Activated CD4-positive, alpha-beta memory T cell treated with anti-CD3 and anti-CD28 coated beads for 36 hours (primary cell): ENCODE measurements at regions of chr1 and their contacts with region 1.

Region 1: DNA sequence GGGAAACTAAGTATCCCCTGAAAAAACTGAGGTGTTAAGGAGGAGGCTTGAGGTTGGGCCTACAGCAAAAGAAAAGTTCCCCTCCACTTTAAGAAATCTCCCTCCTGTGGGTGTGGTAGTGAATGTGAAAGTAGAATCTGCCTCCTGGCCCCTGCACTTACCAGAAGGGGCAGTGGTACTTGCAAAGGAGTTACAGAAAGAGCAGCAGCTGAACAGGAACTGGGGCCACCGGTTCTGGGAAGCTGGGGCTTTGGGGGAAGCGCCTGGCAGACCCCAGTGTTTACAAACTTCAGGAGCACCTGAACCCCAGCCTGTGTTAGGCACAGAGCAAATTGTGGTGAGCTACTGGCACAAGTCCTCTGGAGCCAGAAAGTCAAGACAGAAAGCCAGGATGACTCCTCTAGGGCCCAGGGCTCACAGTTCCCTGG is 250.2 kb upstream of the FGGY start:
- DNase-seq: peak; percentile 64
- H3K4me3 Mint-ChIP-seq: no peak overlapping the region
- H3K27ac Mint-ChIP-seq: peak overlapping the region; percentile 64
- H3K4me1 Mint-ChIP-seq: peaks cover 33% of the 10 kb centered on the region
- H3K27me3 Mint-ChIP-seq: no peaks in the 10 kb centered on the region

Region 2: GRCh38 chr1:58968360-58968952 is 78.3 kb before region 1 on chr1:
- CTCF ChIA-PET with region 1: no interaction called
- POLR2A ChIA-PET with region 1: no interaction called
- intact Hi-C with region 1: loop called (anchors 2 kb)
- DNase-seq: peak; percentile 36
- H3K4me3 Mint-ChIP-seq: peak overlapping the region; percentile 34
- H3K27ac Mint-ChIP-seq: peak overlapping the region; percentile 87
- H3K4me1 Mint-ChIP-seq: peaks cover 25% of the 10 kb centered on the region
- H3K27me3 Mint-ChIP-seq: no peaks in the 10 kb centered on the region

Region 3: DNA sequence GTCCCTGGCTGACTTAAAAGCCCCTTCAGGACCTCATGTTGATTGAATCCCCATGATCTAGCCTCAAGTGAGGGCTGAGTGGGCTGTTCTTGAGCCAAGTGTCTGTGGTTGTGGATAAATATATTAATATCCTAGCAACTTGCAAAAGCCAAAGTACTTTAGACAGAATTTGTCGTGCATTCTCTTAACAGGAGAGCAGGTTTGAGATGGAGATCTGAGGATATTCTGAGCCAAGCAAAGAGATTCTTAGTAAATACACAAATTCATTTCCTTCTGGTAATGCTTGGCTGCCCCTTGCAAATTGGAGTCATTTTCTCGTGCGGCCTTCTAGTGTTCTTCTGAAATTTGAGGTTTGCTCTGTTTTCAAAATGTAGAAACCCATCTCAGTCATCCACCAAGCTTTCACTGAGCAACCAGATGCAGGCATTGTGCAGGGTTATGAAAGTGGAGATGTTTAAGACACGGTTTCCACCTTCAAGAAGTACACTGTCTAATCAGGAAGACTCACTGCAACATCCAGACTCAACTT is 20.8 kb before region 1 on chr1:
- CTCF ChIA-PET with region 1: no interaction called
- POLR2A ChIA-PET with region 1: no interaction called
- intact Hi-C with region 1: loop called (anchors 2 kb)
- DNase-seq: peak; percentile 30
- H3K4me3 Mint-ChIP-seq: no peak overlapping the region
- H3K27ac Mint-ChIP-seq: peak overlapping the region; percentile 86
- H3K4me1 Mint-ChIP-seq: peaks cover 22% of the 10 kb centered on the region
- H3K27me3 Mint-ChIP-seq: no peaks in the 10 kb centered on the region

Region 4: DNA sequence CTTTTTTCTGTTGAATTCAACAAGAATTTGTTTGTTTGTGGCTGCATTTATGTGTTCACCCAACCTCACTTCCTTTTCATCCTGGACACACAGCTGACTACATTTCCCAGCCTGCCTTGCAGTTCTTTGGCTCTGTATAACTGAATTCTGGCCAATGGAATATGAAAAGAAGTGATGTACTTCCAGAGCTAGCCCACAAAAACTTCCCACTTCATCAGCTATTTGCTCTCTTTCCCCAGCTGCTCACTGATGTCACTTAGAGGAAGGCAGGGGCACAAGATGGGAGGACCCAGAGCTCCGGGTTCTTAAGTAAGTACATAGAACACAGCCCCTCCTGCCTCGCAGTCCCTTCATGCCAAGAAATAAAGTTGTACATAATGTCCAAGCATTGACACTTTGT is 15.1 kb after region 1 on chr1:
- CTCF ChIA-PET with region 1: interaction called, 5 read pairs
- POLR2A ChIA-PET with region 1: interaction called, 4 read pairs
- intact Hi-C with region 1: loop called (anchors 2 kb)
- DNase-seq: no peak
- H3K4me3 Mint-ChIP-seq: no peak overlapping the region
- H3K27ac Mint-ChIP-seq: no peak overlapping the region
- H3K4me1 Mint-ChIP-seq: peaks cover 21% of the 10 kb centered on the region
- H3K27me3 Mint-ChIP-seq: no peaks in the 10 kb centered on the region